PC-9 (cell line): ENCODE measurements at regions of chrX and their contacts with region 1.

Region 1: DNA sequence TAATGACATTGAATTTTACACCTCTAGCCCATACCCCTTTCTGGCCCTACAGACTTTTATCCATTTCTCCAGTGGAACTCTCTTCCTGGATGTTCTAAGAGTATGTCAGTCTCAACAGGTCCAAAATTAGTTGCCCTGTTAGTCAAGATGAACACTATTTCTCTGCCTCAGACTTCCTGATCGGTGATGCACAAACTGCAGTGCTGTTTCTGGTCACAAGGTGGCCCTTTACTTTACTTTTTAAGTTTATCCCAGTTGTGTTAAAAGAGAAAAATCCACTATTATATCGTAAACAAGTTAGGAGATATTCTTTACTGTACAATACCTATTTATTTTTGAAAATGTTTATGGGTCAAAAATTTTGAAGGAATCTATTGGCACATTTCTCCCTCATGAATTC is 13.1 kb downstream of the TCEAL7 start:
- DNase-seq: peak; percentile 31 to 37
- H3K4me3 ChIP-seq: no peak overlapping the region
- H3K27ac ChIP-seq: no peak overlapping the region
- H3K4me1 ChIP-seq: no peaks in the 10 kb centered on the region
- H3K27me3 ChIP-seq: no peaks in the 10 kb centered on the region
- CTCF ChIP-seq: peak; percentile 79

Region 2: GRCh38 chrX:103464774-103465117 is 121.6 kb after region 1 on chrX:
- CTCF ChIA-PET with region 1: interaction called, 3 read pairs
- POLR2A ChIA-PET with region 1: no interaction called
- intact Hi-C with region 1: loop called (anchors 1 kb)
- DNase-seq: peak in 1 of 2 experiments; percentile 61
- H3K4me3 ChIP-seq: no peak overlapping the region
- H3K27ac ChIP-seq: no peak overlapping the region
- H3K4me1 ChIP-seq: no peaks in the 10 kb centered on the region
- H3K27me3 ChIP-seq: no peaks in the 10 kb centered on the region
- CTCF ChIP-seq: peak; percentile 81